ENCODE measurements at regions of chr2 and their contacts with region 1.

Region 1: DNA sequence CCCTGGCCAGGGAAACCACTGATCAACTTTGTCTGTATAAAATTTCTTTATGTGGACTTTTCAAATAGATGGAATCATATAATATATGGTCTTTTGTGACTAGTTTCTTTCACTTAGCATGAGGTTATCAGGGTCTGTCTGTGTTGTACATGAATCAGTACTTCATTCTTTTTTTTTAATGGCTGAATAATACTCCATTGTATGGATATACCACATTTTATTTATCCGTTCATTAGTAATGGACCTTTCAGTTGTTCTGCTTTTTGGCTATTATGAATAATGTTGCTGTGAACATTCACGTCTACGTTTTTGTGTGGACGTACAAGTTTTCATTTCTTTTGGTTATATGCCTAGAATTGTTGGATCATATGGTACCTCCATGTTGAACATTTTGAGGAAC is 69.1 kb upstream of the GAREM2 start:
- DNase-seq: no peak
- H3K4me3 Mint-ChIP-seq: no peak overlapping the region
- H3K27ac Mint-ChIP-seq: no peak overlapping the region
- H3K4me1 Mint-ChIP-seq: peaks cover 8% of the 10 kb centered on the region
- H3K27me3 Mint-ChIP-seq: no peaks in the 10 kb centered on the region
- CTCF ChIP-seq: no peak

Region 2: DNA sequence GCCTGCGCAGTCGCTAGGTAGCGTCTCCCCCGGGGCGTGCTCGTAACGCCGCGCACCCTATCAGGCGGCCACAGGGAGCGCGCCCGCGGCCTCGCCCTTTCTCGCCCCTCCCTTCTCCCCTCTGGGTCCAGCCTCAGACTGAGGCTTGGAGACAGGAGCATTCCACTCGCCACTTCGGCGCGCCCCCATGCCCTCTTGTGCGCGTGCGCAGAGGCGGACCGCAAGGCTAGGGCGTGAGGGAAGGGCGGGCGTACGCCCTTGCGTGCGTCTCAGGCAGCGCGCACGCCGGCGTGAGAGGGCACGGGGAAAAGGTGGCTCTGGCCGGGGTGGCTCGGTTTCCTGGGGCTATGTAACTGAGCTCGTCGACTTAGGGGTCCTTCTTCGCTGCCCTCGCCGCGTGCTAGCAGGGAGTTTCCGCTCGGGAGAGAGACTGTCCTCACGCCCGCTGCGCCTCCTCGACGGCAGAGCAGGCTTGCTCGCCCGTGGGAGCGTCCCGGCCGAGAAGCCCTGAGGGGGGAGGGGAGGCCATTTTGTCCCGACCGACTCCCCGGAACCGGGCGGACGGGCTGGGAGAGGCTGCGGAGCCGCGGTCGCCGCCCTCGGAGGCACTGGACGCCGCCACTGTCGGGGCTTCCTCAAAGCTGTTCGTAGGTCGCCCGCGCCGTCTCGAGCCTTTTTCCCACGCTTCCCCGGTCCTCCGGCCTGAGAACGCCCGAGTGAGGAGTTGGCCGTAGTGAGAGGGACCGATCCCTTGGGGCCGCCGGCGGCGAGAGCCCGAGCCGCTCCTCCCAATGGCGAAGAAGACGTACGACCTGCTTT is 69.7 kb before region 1 on chr2 and contains the start of gene RAB10:
- CTCF ChIA-PET with region 1: no interaction called
- intact Hi-C with region 1: no loop called
- DNase-seq: peak; percentile 99
- H3K4me3 Mint-ChIP-seq: peak within 1 kb of the TSS; percentile 77
- H3K27ac Mint-ChIP-seq: peak within 1 kb of the TSS; percentile 68
- H3K4me1 Mint-ChIP-seq: peaks cover 13% of the 10 kb centered on the region
- H3K27me3 Mint-ChIP-seq: no peaks in the 10 kb centered on the region
- CTCF ChIP-seq: no peak
- total RNA-seq, gene RAB10: 149 and 157 TPM in 2 replicates

Region 3: DNA sequence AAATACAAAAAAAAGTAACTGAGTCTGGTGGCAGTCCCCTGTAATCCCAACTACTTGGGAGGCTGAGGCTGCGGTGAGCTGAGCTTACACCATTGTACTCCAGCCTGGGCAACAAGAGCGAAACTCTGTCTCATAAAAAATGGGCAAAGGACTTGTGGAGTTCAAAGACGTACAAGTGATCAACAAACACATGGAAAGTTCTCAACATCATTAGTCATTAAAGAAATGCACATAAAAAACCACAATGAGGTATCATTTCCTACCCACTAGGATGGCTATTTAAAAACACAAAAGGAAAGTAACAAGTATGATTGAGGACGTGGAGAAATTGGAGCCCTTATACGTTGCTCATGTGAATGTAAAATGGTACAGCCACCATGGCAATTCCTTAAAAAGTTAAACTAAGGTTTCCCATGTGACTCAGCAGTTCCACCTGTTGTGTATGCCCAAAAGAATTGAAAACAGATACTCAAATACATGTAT is 17.6 kb before region 1 on chr2:
- CTCF ChIA-PET with region 1: no interaction called
- intact Hi-C with region 1: no loop called
- DNase-seq: no peak
- H3K4me3 Mint-ChIP-seq: no peak overlapping the region
- H3K27ac Mint-ChIP-seq: no peak overlapping the region
- H3K4me1 Mint-ChIP-seq: peaks cover 13% of the 10 kb centered on the region
- H3K27me3 Mint-ChIP-seq: no peaks in the 10 kb centered on the region
- CTCF ChIP-seq: no peak

Region 4: GRCh38 chr2:26268184-26268583 is 164.4 kb after region 1 on chr2:
- CTCF ChIA-PET with region 1: interaction called, 13 read pairs
- intact Hi-C with region 1: no loop called
- DNase-seq: no peak
- H3K4me3 Mint-ChIP-seq: no peak overlapping the region
- H3K27ac Mint-ChIP-seq: no peak overlapping the region
- H3K4me1 Mint-ChIP-seq: peaks cover 11% of the 10 kb centered on the region
- H3K27me3 Mint-ChIP-seq: no peaks in the 10 kb centered on the region
- CTCF ChIP-seq: no peak